A549 (cell line): ENCODE measurements at regions of chr3 and their contacts with region 1.

Region 1: GRCh38 chr3:15629860-15630597 is 28.5 kb downstream of the BTD start:
- DNase-seq: peak; percentile 82 to 86
- ATAC-seq: peak; percentile 94 to 95
- H3K4me3 ChIP-seq: peak overlapping the region; percentile 28
- H3K27ac ChIP-seq: peak overlapping the region; percentile 75 to 95
- H3K4me1 ChIP-seq: peaks cover 53% of the 10 kb centered on the region
- CTCF ChIP-seq: peak; percentile 58
- EP300 ChIP-seq: no peak
- POLR2A ChIP-seq: no peak
- RAD21 ChIP-seq: peak; percentile 90 to 94

Region 2: DNA sequence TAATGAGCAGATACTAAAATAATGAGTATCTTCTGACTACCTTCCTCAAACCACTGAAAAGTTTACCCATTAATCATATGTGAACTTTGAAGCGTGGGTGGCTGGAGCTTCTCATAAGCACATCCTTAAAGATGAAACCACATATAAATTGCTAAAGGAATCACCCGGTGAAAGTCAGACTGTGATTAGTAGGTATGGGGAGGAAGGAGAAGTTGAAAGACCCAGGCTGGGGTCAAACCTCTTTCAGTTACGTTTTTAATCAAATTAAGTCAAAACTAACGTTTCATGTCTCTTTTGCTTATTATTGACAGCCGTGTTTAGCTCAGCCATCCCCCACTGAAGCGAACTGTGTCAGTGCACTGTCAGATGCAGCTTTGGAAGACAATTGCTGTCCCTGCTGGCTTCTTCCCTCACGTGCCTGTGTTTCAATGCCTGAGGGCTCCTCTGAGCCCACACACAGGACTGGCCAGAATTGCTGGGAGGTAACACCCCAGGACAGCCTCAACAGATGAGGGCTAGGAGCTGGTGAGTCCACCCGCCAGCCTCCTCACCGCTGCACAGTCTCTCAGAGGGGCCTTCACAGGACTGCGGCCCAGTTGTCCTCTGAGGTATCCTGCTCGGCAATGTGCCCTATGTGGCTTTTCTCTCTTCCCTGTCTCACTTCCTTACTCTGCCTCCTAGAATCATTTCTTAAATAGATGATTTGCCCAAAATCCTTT is 268.4 kb before region 1 on chr3:
- CTCF ChIA-PET with region 1: no interaction called
- POLR2A ChIA-PET with region 1: no interaction called
- DNase-seq: no peak
- ATAC-seq: peak; percentile 34 to 42; a peak in 4 of 6 replicates
- H3K4me3 ChIP-seq: no peak overlapping the region
- H3K27ac ChIP-seq: no peak overlapping the region
- H3K4me1 ChIP-seq: peaks cover 6% of the 10 kb centered on the region; the same call in 2 of the 3 replicates
- CTCF ChIP-seq: no peak
- EP300 ChIP-seq: no peak
- POLR2A ChIP-seq: no peak
- RAD21 ChIP-seq: no peak

Region 3: GRCh38 chr3:15427182-15427880 is 202.7 kb before region 1 on chr3 and contains the starts of genes EAF1 and METTL6:
- CTCF ChIA-PET with region 1: no interaction called
- POLR2A ChIA-PET with region 1: no interaction called
- DNase-seq: peak; percentile 85 to 94
- ATAC-seq: peak; percentile 97 to 99
- H3K4me3 ChIP-seq: peak within 1 kb of the TSS; percentile 84
- H3K27ac ChIP-seq: peak within 1 kb of the TSS; percentile 81 to 95
- H3K4me1 ChIP-seq: peaks cover 21% of the 10 kb centered on the region; the same call in 2 of the 3 replicates
- CTCF ChIP-seq: no peak
- EP300 ChIP-seq: no peak
- POLR2A ChIP-seq: peak; percentile 49
- RAD21 ChIP-seq: no peak
- polyA plus RNA-seq, gene EAF1: 18.6 and 20.7 TPM in 2 replicates
- polyA plus RNA-seq, gene METTL6: 37.4 and 42.7 TPM in 2 replicates

Region 4: GRCh38 chr3:15460891-15461531 is 169.0 kb before region 1 on chr3:
- CTCF ChIA-PET with region 1: no interaction called
- POLR2A ChIA-PET with region 1: no interaction called
- DNase-seq: no peak
- ATAC-seq: peak in 1 of 2 experiments; percentile 45; a peak in 4 of 6 replicates
- H3K4me3 ChIP-seq: no peak overlapping the region
- H3K27ac ChIP-seq: no peak overlapping the region
- H3K4me1 ChIP-seq: no peaks in the 10 kb centered on the region
- CTCF ChIP-seq: no peak
- EP300 ChIP-seq: no peak
- POLR2A ChIP-seq: no peak
- RAD21 ChIP-seq: no peak

Region 5: GRCh38 chr3:15616053-15616452 is 14.0 kb before region 1 on chr3:
- CTCF ChIA-PET with region 1: interaction called, 27 read pairs
- POLR2A ChIA-PET with region 1: no interaction called
- DNase-seq: no peak
- ATAC-seq: no peak
- H3K4me3 ChIP-seq: no peak overlapping the region
- H3K27ac ChIP-seq: no peak overlapping the region
- H3K4me1 ChIP-seq: 0 out of 3 replicates have a peak, but pooled peaks cover 8% of the 10 kb centered on the region
- CTCF ChIP-seq: no peak
- EP300 ChIP-seq: no peak
- POLR2A ChIP-seq: no peak
- RAD21 ChIP-seq: no peak

Region 6: GRCh38 chr3:15647611-15648167 is 17.7 kb after region 1 on chr3:
- CTCF ChIA-PET with region 1: interaction called, 27 read pairs
- POLR2A ChIA-PET with region 1: interaction called, 5 read pairs
- DNase-seq: no peak
- ATAC-seq: no peak
- H3K4me3 ChIP-seq: no peak overlapping the region
- H3K27ac ChIP-seq: peak overlapping the region; percentile 82 to 88
- H3K4me1 ChIP-seq: peaks cover 31% of the 10 kb centered on the region
- CTCF ChIP-seq: no peak
- EP300 ChIP-seq: no peak
- POLR2A ChIP-seq: no peak
- RAD21 ChIP-seq: no peak

Region 7: DNA sequence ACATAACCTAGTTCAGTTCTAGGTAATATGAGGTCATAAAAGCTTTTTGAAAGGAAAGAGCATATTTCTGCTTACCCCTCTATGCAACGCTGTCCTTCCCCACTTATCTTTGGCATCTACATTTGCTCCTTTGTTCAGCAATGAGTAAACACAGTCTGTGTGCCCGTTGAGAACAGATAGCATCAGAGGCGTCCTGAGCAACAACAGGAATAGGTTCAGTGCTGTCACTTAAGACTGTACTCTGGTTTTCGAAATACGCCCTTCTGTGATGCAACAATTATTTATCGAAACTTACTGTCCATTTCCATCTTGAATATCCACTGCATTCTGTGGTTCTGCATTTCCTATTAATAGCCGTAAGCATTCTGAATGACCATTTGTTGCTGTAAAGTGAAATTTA is 55.9 kb after region 1 on chr3:
- CTCF ChIA-PET with region 1: interaction called, 12 read pairs
- POLR2A ChIA-PET with region 1: no interaction called
- DNase-seq: no peak
- ATAC-seq: no peak
- H3K4me3 ChIP-seq: no peak overlapping the region
- H3K27ac ChIP-seq: no peak overlapping the region
- H3K4me1 ChIP-seq: peaks cover 4% of the 10 kb centered on the region; the same call in 1 of the 3 replicates
- CTCF ChIP-seq: no peak
- EP300 ChIP-seq: no peak
- POLR2A ChIP-seq: no peak
- RAD21 ChIP-seq: no peak

Region 8: DNA sequence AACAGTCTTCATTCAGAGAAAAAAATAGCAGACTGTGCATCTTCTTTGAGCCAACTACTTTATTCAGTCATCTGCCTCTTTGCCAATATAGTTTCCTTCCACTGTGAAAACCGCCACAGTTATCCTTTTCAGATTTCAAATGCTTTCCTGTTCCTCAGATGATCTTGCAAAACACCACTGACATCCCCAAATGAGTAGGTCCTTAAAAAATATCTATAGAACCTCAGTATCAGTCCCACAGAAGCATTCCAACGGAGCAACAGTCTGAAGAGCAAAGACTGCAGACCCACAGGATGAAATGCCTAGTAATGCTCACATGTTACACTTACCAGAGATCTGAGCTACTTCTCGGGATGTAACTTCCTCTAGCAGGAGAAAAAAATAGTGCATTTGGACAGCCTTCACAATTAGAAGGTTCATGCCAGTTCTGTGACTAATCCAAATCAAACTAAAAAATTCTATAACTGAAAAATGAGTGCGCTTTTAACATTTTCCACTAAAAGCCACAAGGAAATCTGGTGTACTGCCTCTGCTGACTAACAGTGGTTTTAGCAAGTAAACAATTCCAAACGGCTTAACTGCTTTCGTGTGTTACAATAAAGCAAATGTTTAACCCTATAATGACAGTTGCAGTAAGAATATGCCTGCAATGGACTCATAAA is 167.7 kb after region 1 on chr3 and contains the start of gene ANKRD28:
- CTCF ChIA-PET with region 1: interaction called, 12 read pairs
- POLR2A ChIA-PET with region 1: interaction called, 9 read pairs
- DNase-seq: peak; percentile 45 to 89
- ATAC-seq: peak; percentile 90
- H3K4me3 ChIP-seq: peak within 1 kb of the TSS; percentile 45
- H3K27ac ChIP-seq: peak within 1 kb of the TSS; percentile 89 to 92
- H3K4me1 ChIP-seq: peaks cover 45% of the 10 kb centered on the region
- CTCF ChIP-seq: no peak
- EP300 ChIP-seq: peak; percentile 35 to 70; a peak in 3 of 5 replicates
- POLR2A ChIP-seq: no peak
- RAD21 ChIP-seq: peak; percentile 20 to 48; a peak in 4 of 5 replicates
- polyA plus RNA-seq, gene ANKRD28: 72.0 and 73.2 TPM in 2 replicates

Region 9: GRCh38 chr3:15808668-15809310 is 178.8 kb after region 1 on chr3:
- CTCF ChIA-PET with region 1: interaction called, 59 read pairs
- POLR2A ChIA-PET with region 1: no interaction called
- DNase-seq: no peak
- ATAC-seq: no peak
- H3K4me3 ChIP-seq: no peak overlapping the region
- H3K27ac ChIP-seq: peak overlapping the region in 1 of 2 experiments; percentile 38; a peak in 1 of 6 replicates
- H3K4me1 ChIP-seq: peaks cover 38% of the 10 kb centered on the region; the same call in 2 of the 3 replicates
- CTCF ChIP-seq: no peak
- EP300 ChIP-seq: no peak
- POLR2A ChIP-seq: no peak
- RAD21 ChIP-seq: no peak

Region 10: GRCh38 chr3:15815696-15816095 is 185.7 kb after region 1 on chr3:
- CTCF ChIA-PET with region 1: interaction called, 59 read pairs
- POLR2A ChIA-PET with region 1: no interaction called
- DNase-seq: peak; percentile 21 to 78
- ATAC-seq: peak in 1 of 2 experiments; percentile 84; a peak in 4 of 6 replicates
- H3K4me3 ChIP-seq: no peak overlapping the region
- H3K27ac ChIP-seq: no peak overlapping the region; a peak in 1 of 6 replicates
- H3K4me1 ChIP-seq: peaks cover 18% of the 10 kb centered on the region; the same call in 2 of the 3 replicates
- CTCF ChIP-seq: peak; percentile 68
- EP300 ChIP-seq: no peak
- POLR2A ChIP-seq: no peak
- RAD21 ChIP-seq: peak; percentile 82 to 83